GM12878 (cell line): ENCODE measurements at regions of chr6 and their contacts with region 1.

Region 1: GRCh38 chr6:30102970-30103874 is 9.7 kb downstream of the TRIM31 start:
- DNase-seq: peak; percentile 24
- ATAC-seq: peak; percentile 88
- H3K4me3 ChIP-seq: peak overlapping the region; percentile 53; the same call in 1 of the 2 replicates
- H3K27ac ChIP-seq: no peak overlapping the region
- H3K4me1 ChIP-seq: peaks cover 19% of the 10 kb centered on the region
- H3K27me3 ChIP-seq: peaks cover 12 to 27% of the 10 kb centered on the region in 2 experiments
- CTCF ChIP-seq: peak; percentile 95 to 97 (median 96)
- EP300 ChIP-seq: no peak
- POLR2A ChIP-seq: no peak
- RAD21 ChIP-seq: peak; percentile 96

Region 2: DNA sequence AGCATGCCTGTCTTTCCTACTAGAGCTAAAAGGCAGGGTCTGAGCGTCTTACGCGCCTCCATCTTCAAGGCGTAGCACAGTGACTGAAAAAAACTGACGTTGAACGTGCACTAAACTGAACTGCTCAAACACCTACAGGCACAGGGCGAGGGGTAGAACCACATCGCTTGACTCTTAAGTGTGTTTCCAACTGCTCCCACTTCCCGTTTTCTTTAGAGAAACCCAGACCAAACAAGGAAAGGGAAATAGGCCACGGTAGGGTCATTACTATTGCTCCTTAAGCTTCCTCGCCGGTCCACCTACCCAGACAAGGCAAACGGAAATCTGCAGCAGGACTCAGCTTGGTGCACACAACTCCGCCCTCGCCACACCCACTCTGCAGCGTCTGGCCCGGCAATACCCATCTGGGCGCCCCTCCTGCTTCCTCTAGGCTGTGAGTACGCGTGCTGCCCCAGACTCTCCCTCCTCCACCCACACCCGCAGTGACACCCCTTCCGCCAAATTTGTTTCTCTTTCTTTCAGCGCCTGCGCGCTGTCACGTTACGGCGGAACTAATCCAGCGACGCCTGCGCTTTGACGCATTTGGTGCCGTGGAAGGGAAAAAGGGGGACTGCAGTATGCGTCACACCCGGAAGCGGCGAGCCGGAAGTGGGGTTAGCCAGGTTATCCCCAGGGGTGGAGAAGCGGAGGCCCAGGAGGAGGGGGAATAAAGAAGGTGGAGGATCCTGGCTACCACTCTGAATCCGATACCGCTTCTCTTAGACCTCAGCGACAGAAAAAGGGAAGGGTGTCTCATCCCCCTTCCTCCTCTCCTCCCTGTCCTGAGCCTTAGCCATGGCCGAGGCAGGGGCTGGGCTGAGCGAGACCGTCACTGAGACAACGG is 36.4 kb before region 1 on chr6 and contains the start of gene PPP1R11:
- CTCF ChIA-PET with region 1: interaction called, 19 read pairs
- POLR2A ChIA-PET with region 1: interaction called, 4 read pairs
- RAD21 ChIA-PET with region 1: interaction called, 18 read pairs
- SMC1A ChIA-PET with region 1: interaction called, 6 read pairs
- in situ Hi-C with region 1: no loop called
- intact Hi-C with region 1: no loop called
- DNase-seq: peak; percentile 99
- ATAC-seq: peak; percentile 99
- H3K4me3 ChIP-seq: peak within 1 kb of the TSS; percentile 84
- H3K27ac ChIP-seq: peak within 1 kb of the TSS; percentile 88
- H3K4me1 ChIP-seq: no peaks in the 10 kb centered on the region
- H3K27me3 ChIP-seq: peaks cover 0 to 3% of the 10 kb centered on the region in 2 experiments; a peak in 2 of 4 replicates
- CTCF ChIP-seq: no peak
- EP300 ChIP-seq: peak in 1 of 2 experiments; percentile 63; a peak in 2 of 4 replicates
- POLR2A ChIP-seq: peak; percentile 91
- RAD21 ChIP-seq: no peak
- polyA plus RNA-seq, gene PPP1R11: 12.6 to 13.4 TPM

Region 3: DNA sequence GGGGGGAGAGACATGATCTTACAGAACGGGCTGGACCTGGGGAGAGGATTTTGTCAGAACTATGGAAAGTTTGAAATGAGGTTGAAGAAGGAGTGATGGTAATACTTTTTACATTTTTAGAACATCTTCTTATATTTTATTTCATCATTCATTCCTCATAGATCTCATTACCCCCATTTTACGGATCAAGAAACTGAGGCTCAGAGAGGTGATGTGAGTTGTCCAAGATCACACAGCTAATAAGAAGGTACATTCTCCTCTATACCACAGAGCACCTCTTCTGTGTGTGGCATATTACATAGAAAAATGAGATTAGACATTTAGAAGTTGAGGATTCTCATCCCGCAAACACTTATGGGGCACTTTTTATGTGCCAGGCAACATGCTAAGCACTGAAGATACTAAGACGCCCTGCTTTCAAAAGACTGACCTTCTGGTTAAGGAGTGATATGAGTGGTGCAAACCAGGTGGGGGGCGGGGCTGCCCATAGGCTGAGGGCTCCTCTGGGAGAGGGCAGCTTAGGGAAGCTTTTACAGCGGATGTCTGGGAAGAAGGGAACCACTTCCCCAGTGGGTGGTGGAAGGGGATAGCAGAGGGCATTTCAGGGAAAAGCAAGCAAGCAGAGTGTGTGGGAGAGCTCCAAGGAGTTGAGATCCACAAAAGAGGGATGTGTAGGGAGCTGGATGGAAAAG is 10.2 kb before region 1 on chr6:
- CTCF ChIA-PET with region 1: interaction called, 7 read pairs
- POLR2A ChIA-PET with region 1: no interaction called
- RAD21 ChIA-PET with region 1: interaction called, 10 read pairs
- SMC1A ChIA-PET with region 1: interaction called, 11 read pairs
- in situ Hi-C with region 1: no loop called
- intact Hi-C with region 1: no loop called
- DNase-seq: no peak
- ATAC-seq: no peak
- H3K4me3 ChIP-seq: no peak overlapping the region
- H3K27ac ChIP-seq: no peak overlapping the region
- H3K4me1 ChIP-seq: no peaks in the 10 kb centered on the region
- H3K27me3 ChIP-seq: peaks cover 3 to 4% of the 10 kb centered on the region in 2 experiments; a peak in 2 of 4 replicates
- CTCF ChIP-seq: no peak
- EP300 ChIP-seq: no peak
- POLR2A ChIP-seq: no peak
- RAD21 ChIP-seq: no peak

Region 4: DNA sequence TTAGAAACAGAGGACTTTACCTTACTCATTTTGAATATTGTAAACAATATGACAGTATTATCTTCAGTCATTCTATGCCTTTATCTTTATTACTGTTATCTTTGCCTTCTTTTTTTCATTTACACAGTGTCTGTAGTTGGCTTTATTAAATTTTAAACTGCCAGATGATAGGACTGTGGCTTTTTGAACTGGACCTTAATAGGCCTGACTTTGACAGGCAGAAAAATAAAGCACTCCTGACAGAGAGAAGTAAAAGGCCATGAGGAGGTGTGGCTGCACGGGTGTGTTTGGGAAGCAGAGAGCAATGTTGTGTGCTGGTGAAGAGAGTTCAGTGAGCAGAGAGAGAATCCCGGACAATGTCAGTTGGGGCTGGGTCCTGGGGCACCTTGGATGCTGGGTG is 40.6 kb after region 1 on chr6:
- CTCF ChIA-PET with region 1: interaction called, 28 read pairs
- POLR2A ChIA-PET with region 1: no interaction called
- RAD21 ChIA-PET with region 1: interaction called, 4 read pairs
- SMC1A ChIA-PET with region 1: interaction called, 647 read pairs
- in situ Hi-C with region 1: no loop called
- intact Hi-C with region 1: no loop called
- DNase-seq: no peak
- ATAC-seq: no peak
- H3K4me3 ChIP-seq: no peak overlapping the region
- H3K27ac ChIP-seq: no peak overlapping the region
- H3K4me1 ChIP-seq: no peaks in the 10 kb centered on the region; the same call in 1 of the 2 replicates
- H3K27me3 ChIP-seq: peaks cover 2 to 3% of the 10 kb centered on the region in 2 experiments; a peak in 2 of 4 replicates
- CTCF ChIP-seq: no peak
- EP300 ChIP-seq: no peak
- POLR2A ChIP-seq: no peak
- RAD21 ChIP-seq: no peak

Region 5: GRCh38 chr6:30169658-30170614 is 66.7 kb after region 1 on chr6:
- CTCF ChIA-PET with region 1: interaction called, 46 read pairs
- POLR2A ChIA-PET with region 1: no interaction called
- RAD21 ChIA-PET with region 1: interaction called, 38 read pairs
- SMC1A ChIA-PET with region 1: interaction called, 34 read pairs
- in situ Hi-C with region 1: no loop called
- intact Hi-C with region 1: loop called (anchors 1 kb)
- DNase-seq: peak; percentile 20
- ATAC-seq: peak; percentile 93
- H3K4me3 ChIP-seq: no peak overlapping the region
- H3K27ac ChIP-seq: no peak overlapping the region
- H3K4me1 ChIP-seq: no peaks in the 10 kb centered on the region
- H3K27me3 ChIP-seq: peaks cover 8 to 20% of the 10 kb centered on the region in 2 experiments
- CTCF ChIP-seq: peak; percentile 74 to 81 (median 76)
- EP300 ChIP-seq: no peak
- POLR2A ChIP-seq: no peak
- RAD21 ChIP-seq: peak; percentile 90